Activated CD4-positive, alpha-beta memory T cell treated with anti-CD3 and anti-CD28 coated beads for 36 hours (primary cell): ENCODE measurements at regions of chr12 and their contacts with region 1.

Region 1: DNA sequence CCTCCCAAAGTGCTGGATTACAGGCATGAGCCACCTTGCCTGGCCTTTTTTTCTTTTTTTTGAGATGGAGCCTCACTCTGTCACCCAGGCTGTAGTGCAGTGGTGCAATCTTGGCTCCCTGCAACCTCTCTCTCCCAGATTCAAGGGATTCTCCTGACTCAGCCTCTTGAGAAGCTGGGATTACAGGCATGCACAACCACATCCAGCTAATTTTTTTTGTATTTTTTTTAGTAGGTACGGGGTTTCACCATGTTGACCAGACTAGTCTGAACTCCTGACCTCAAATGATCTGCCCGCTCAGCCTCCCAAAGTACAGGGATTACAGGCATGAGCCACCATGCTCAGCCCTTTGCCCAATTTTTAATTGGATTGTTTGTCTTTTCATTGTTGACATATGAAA is 58.0 kb downstream of the SINHCAF start:
- DNase-seq: no peak
- H3K4me3 Mint-ChIP-seq: no peak overlapping the region
- H3K27ac Mint-ChIP-seq: no peak overlapping the region
- H3K4me1 Mint-ChIP-seq: peaks cover 5% of the 10 kb centered on the region
- H3K27me3 Mint-ChIP-seq: no peaks in the 10 kb centered on the region

Region 2: GRCh38 chr12:30847259-30847658 is 420.7 kb before region 1 on chr12:
- CTCF ChIA-PET with region 1: interaction called, 44 read pairs
- POLR2A ChIA-PET with region 1: no interaction called
- intact Hi-C with region 1: loop called (anchors 1 kb)
- DNase-seq: no peak
- H3K4me3 Mint-ChIP-seq: no peak overlapping the region
- H3K27ac Mint-ChIP-seq: no peak overlapping the region
- H3K4me1 Mint-ChIP-seq: peaks cover 6% of the 10 kb centered on the region
- H3K27me3 Mint-ChIP-seq: no peaks in the 10 kb centered on the region

Region 3: DNA sequence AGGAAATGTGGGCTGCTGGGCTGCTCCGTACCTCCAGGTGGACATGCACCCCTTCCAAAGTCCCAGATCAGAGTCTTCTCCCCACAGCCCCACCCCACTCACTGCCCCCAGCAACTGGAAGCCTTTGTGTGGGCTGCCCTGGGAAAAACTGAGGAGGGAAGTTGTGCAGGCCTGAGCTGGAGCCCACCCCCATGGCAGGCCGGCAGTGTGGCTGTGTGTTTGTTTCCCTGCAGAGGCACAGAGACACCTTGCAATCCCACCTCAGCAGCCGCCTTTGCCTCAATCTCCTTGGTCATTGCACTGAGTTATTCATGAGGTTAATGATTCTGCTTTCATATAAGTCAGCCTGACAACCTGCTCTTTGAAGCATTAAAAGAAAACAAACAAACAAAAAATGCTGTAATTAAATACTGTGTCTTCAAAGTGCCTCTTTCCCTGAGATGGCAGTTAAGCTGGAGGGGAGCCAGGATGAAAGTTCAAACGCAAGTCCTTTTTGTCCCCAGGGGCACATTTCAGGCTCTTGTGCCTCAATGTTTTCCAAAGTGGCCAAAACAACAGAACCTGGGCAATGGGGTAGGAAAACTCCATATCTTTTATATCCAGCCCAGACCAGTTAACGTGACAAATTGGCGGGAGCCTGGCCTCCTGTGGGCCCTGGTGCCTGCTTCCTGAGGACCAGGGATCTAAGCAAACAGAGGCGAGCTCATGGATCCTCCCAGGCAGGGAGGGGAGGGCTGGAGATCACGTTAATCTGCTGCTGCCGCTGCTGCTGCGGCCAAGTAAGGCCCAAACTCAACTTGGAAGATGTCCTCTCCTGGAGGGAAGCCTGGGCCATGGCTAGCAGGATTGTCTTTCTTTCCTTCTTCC is 393.3 kb before region 1 on chr12:
- CTCF ChIA-PET with region 1: no interaction called
- POLR2A ChIA-PET with region 1: no interaction called
- intact Hi-C with region 1: no loop called
- DNase-seq: no peak
- H3K4me3 Mint-ChIP-seq: no peak overlapping the region
- H3K27ac Mint-ChIP-seq: no peak overlapping the region
- H3K4me1 Mint-ChIP-seq: peaks cover 3% of the 10 kb centered on the region
- H3K27me3 Mint-ChIP-seq: peaks cover 12% of the 10 kb centered on the region

Region 4: DNA sequence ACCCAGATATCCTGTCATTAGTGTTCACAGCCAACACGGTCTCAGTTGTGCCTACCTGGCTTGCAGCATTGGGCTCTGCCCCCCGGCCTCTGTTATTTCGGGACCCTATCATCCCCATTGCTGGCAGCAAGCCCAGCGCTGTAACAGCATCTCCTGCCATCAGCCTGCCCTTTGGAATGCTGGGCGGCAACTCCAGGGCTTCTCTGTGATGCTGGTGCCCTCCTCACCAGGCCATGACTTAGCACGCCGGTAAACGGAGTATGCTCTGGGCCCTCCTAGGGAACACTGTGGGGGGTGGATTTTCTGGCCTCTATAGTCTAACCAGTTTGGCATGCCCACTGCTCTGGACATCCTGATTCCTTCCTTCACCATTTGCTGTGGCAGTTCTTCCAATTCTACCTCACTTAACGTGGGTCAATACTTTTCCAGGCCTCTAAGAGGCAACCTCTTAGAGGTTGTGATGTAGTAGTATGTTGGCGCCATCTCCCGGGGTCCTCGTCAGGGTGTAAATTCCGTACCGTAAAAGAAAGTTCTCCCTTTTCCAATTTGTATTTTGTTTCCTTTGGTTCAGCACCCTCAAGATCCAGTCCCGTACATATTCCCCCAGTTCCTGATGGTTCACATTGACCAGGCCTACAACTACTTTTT is 22.0 kb before region 1 on chr12:
- CTCF ChIA-PET with region 1: interaction called, 40 read pairs
- POLR2A ChIA-PET with region 1: no interaction called
- intact Hi-C with region 1: no loop called
- DNase-seq: no peak
- H3K4me3 Mint-ChIP-seq: no peak overlapping the region
- H3K27ac Mint-ChIP-seq: no peak overlapping the region
- H3K4me1 Mint-ChIP-seq: no peaks in the 10 kb centered on the region
- H3K27me3 Mint-ChIP-seq: no peaks in the 10 kb centered on the region

Region 5: DNA sequence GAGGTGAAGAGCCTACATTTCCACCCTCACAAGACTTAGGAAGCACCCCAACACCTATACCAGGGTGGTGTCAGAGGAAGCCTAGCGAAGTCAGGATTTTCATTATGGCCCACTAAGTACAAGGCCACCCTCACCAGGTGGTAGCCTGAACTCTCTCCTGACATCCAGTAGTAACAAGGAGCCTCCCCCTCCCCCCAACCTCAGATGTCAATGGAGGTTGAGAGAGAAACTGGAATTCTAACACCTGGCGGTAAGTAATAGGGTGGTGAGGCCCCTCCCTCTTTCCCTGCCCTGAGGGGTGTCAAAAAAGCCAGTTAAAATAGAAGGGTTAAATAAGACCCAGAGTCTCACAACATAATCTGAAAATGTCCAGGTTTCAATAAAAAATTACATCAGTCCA is 20.4 kb after region 1 on chr12:
- CTCF ChIA-PET with region 1: interaction called, 26 read pairs
- POLR2A ChIA-PET with region 1: no interaction called
- intact Hi-C with region 1: no loop called
- DNase-seq: no peak
- H3K4me3 Mint-ChIP-seq: no peak overlapping the region
- H3K27ac Mint-ChIP-seq: peak overlapping the region; percentile 40
- H3K4me1 Mint-ChIP-seq: no peaks in the 10 kb centered on the region
- H3K27me3 Mint-ChIP-seq: no peaks in the 10 kb centered on the region

Region 6: DNA sequence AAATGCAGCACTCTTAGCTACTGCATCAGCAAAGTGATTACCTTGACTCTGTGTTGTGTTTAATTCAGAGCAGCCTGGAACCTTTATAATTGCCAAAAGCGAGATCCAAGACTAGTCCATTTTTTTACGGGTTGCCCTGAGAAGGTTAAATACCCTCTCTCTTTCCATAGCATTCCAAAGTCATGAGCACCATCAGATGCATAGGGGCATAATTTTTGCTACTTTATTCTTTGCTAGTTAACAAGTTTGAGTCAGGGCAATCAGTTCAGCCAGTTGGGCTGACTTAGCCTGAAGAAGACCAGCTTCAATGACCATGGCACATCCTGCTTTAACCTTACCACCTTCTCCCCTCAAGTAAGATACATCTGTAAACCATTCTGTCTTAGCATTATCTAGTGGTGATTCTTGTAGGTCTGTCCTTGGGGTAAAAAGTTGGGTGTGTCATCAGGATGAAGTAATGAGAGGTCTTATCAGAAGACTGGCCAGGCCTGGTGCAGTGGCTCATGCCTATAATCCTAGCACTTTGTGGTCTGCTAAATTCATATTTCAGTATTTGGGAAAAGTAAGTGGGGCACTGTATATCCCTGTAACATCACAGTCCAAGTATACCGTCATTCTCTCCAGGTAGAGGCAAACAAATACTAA is 38.8 kb after region 1 on chr12:
- CTCF ChIA-PET with region 1: interaction called, 15 read pairs
- POLR2A ChIA-PET with region 1: no interaction called
- intact Hi-C with region 1: no loop called
- DNase-seq: no peak
- H3K4me3 Mint-ChIP-seq: no peak overlapping the region
- H3K27ac Mint-ChIP-seq: peak overlapping the region; percentile 23
- H3K4me1 Mint-ChIP-seq: peaks cover 57% of the 10 kb centered on the region
- H3K27me3 Mint-ChIP-seq: no peaks in the 10 kb centered on the region

Region 7: GRCh38 chr12:31362759-31363415 is 94.9 kb after region 1 on chr12:
- CTCF ChIA-PET with region 1: interaction called, 10 read pairs
- POLR2A ChIA-PET with region 1: no interaction called
- intact Hi-C with region 1: no loop called
- DNase-seq: peak; percentile 48
- H3K4me3 Mint-ChIP-seq: peak overlapping the region; percentile 9
- H3K27ac Mint-ChIP-seq: peak overlapping the region; percentile 2
- H3K4me1 Mint-ChIP-seq: peaks cover 18% of the 10 kb centered on the region
- H3K27me3 Mint-ChIP-seq: peaks cover 2% of the 10 kb centered on the region

Region 8: GRCh38 chr12:31456562-31456961 is 188.6 kb after region 1 on chr12:
- CTCF ChIA-PET with region 1: no interaction called
- POLR2A ChIA-PET with region 1: no interaction called
- intact Hi-C with region 1: no loop called
- DNase-seq: no peak
- H3K4me3 Mint-ChIP-seq: no peak overlapping the region
- H3K27ac Mint-ChIP-seq: no peak overlapping the region
- H3K4me1 Mint-ChIP-seq: no peaks in the 10 kb centered on the region
- H3K27me3 Mint-ChIP-seq: peaks cover 2% of the 10 kb centered on the region